ENCODE measurements at regions of chr6 and their contacts with region 1.

Region 1: GRCh38 chr6:92047860-92048259 is 1371.5 kb downstream of the EPHA7 start:
- DNase-seq: no peak
- ATAC-seq: no peak
- H3K4me3 ChIP-seq: no peak overlapping the region
- H3K27ac ChIP-seq: no peak overlapping the region
- H3K4me1 ChIP-seq: no peaks in the 10 kb centered on the region
- H3K27me3 ChIP-seq: no peaks in the 10 kb centered on the region
- CTCF ChIP-seq: no peak
- EP300 ChIP-seq: no peak
- POLR2A ChIP-seq: no peak
- RAD21 ChIP-seq: no peak

Region 2: GRCh38 chr6:92110403-92110802 is 62.5 kb after region 1 on chr6:
- CTCF ChIA-PET with region 1: no interaction called
- POLR2A ChIA-PET with region 1: no interaction called
- RAD21 ChIA-PET with region 1: interaction called, 3 read pairs
- SMC1A ChIA-PET with region 1: interaction called, 10 read pairs
- in situ Hi-C with region 1: no loop called
- intact Hi-C with region 1: no loop called
- DNase-seq: no peak
- ATAC-seq: peak; percentile 82
- H3K4me3 ChIP-seq: no peak overlapping the region
- H3K27ac ChIP-seq: no peak overlapping the region
- H3K4me1 ChIP-seq: no peaks in the 10 kb centered on the region
- H3K27me3 ChIP-seq: no peaks in the 10 kb centered on the region
- CTCF ChIP-seq: no peak
- EP300 ChIP-seq: no peak
- POLR2A ChIP-seq: no peak
- RAD21 ChIP-seq: no peak

Region 3: DNA sequence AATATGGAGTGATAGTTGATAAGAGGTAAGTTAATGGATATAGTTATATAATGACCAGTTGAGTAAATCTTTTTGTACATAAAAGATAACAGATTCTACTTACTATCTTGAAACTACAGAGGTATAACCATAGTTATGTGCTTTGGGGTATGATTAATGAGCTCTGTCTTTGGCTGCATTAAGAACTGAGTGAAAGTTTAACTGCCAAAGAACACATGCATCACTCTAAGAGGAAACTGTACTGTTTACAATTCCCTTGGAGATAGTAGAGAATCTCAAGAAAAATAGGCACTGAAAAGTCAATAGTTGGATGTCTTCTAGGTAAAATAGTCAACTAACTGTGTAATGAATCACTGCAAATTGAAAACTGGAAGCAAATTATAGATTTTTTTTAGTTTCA is 242.0 kb after region 1 on chr6:
- CTCF ChIA-PET with region 1: no interaction called
- POLR2A ChIA-PET with region 1: no interaction called
- RAD21 ChIA-PET with region 1: no interaction called
- SMC1A ChIA-PET with region 1: no interaction called
- in situ Hi-C with region 1: no loop called
- intact Hi-C with region 1: no loop called
- DNase-seq: no peak
- ATAC-seq: no peak
- H3K4me3 ChIP-seq: no peak overlapping the region
- H3K27ac ChIP-seq: no peak overlapping the region
- H3K4me1 ChIP-seq: no peaks in the 10 kb centered on the region
- H3K27me3 ChIP-seq: no peaks in the 10 kb centered on the region
- CTCF ChIP-seq: no peak
- EP300 ChIP-seq: no peak
- POLR2A ChIP-seq: no peak
- RAD21 ChIP-seq: no peak

Measured in GM12878 (cell line).